Ascending aorta (tissue), 2 donors: ENCODE measurements at regions of chr15 and their contacts with region 1.

Region 1: DNA sequence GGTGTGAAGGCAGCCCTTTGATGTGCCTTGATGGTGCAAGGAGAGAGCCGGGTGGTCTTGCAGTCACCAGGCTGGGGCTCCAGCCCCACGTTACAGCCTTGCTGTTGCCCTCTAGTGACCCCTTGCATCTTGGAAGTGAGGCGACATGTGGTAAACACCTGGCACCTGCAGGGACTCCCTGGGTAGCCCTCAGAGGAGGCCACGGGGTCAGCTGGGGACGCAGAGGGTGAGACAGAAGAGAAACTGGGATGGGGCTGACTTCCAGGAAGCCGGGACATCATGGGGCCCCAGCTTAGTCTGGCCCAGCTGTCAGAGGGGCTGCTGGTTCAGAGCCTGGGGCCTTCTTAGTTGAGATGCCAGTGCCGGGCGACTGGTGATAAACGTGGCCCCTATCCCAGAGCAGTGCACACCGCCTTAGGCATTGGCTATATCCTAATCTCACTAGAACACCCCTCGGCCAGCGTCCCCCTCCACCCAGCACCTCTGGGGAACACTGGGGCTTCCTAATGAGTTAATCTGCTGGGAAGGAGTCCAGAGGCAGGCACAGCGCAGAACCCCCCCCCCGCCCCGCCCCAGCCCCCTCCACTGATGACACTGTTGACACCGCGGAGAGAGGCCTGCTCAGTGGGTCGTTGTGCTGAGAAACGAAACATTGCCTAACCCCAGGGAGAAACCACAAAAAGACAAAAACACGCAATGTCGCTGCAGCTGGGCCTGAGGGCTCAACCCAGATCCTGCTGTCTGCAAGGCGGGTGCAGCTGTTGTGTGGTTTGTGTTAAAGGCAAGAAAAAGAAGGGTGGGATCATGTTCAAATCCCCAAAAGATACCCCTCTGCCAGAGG is 60.5 kb upstream of the KLF13 start:
- DNase-seq: peak in 1 of 2 donors; percentile 73
- H3K4me3 ChIP-seq: no peak overlapping the region
- H3K27ac ChIP-seq: no peak overlapping the region
- H3K4me1 ChIP-seq: no peaks in the 10 kb centered on the region
- H3K27me3 ChIP-seq: no peaks in the 10 kb centered on the region
- CTCF ChIP-seq: no peak

Region 2: GRCh38 chr15:31306426-31307269 is 40.6 kb after region 1 on chr15:
- intact Hi-C with region 1: loop called (anchors 5 kb)
- DNase-seq: peak in 1 of 2 donors; percentile 59
- H3K4me3 ChIP-seq: no peak overlapping the region
- H3K27ac ChIP-seq: no peak overlapping the region
- H3K4me1 ChIP-seq: no peaks in the 10 kb centered on the region
- H3K27me3 ChIP-seq: no peaks in the 10 kb centered on the region
- CTCF ChIP-seq: no peak

Region 3: GRCh38 chr15:31402511-31403056 is 136.5 kb after region 1 on chr15:
- intact Hi-C with region 1: no loop called
- DNase-seq: peak in 1 of 2 donors; percentile 93
- H3K4me3 ChIP-seq: peak overlapping the region in 1 of 2 donors; percentile 20
- H3K27ac ChIP-seq: peak overlapping the region; percentile 89 to 90
- H3K4me1 ChIP-seq: peaks cover 7 to 17% of the 10 kb centered on the region in 2 donors
- H3K27me3 ChIP-seq: no peaks in the 10 kb centered on the region
- CTCF ChIP-seq: no peak